ENCODE measurements at regions of chr1 and their contacts with region 1.

Region 1: GRCh38 chr1:185238447-185238846 is 78.6 kb downstream of the IVNS1ABP start:
- DNase-seq: peak in 4 of 5 donors; percentile 29 to 44 (median 35)
- H3K4me3 ChIP-seq: no peak overlapping the region
- H3K4me3 Mint-ChIP-seq: peak overlapping the region in 4 of 8 donors; percentile 4 to 60 (median 32)
- H3K27ac ChIP-seq: no peak overlapping the region
- H3K27ac Mint-ChIP-seq: peak overlapping the region in 2 of 7 donors; percentile 23 to 70
- H3K4me1 ChIP-seq: peaks cover 25% of the 10 kb centered on the region
- H3K4me1 Mint-ChIP-seq: peaks cover 17 to 35% (median 27%) of the 10 kb centered on the region in 4 donors
- H3K27me3 ChIP-seq: no peaks in the 10 kb centered on the region
- H3K27me3 Mint-ChIP-seq: no peaks in the 10 kb centered on the region

Region 2: GRCh38 chr1:185291652-185292051 is 53.2 kb after region 1 on chr1:
- CTCF ChIA-PET with region 1: interaction called, 22 read pairs
- POLR2A ChIA-PET with region 1: interaction called, 6 read pairs
- intact Hi-C with region 1: no loop called
- DNase-seq: no peak
- H3K4me3 ChIP-seq: no peak overlapping the region
- H3K4me3 Mint-ChIP-seq: no peak overlapping the region
- H3K27ac ChIP-seq: no peak overlapping the region
- H3K27ac Mint-ChIP-seq: peak overlapping the region in 4 of 7 donors; percentile 22 to 88 (median 70)
- H3K4me1 ChIP-seq: peaks cover 7% of the 10 kb centered on the region
- H3K4me1 Mint-ChIP-seq: peaks cover 7 to 32% (median 17%) of the 10 kb centered on the region in 4 donors
- H3K27me3 ChIP-seq: no peaks in the 10 kb centered on the region
- H3K27me3 Mint-ChIP-seq: no peaks in the 10 kb centered on the region

Region 3: DNA sequence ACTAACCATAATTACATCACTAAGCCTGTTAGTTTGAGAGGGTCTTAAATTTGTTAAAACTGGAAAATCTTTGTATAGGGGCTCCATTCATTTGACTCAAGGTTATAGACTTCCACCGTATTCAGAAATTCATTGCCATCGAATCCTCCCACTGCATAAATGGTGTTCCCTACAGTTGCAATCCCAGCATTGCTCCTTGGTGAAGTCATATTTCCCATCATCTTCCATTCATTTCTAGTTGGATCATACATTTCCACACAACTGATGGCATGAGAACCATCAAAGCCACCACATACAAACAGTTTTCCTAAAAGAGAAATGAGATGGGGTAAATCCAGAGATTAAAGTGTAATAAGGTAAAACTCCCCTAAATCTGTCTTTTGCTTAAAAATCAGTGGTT is 59.5 kb after region 1 on chr1:
- CTCF ChIA-PET with region 1: interaction called, 22 read pairs
- POLR2A ChIA-PET with region 1: interaction called, 6 read pairs
- intact Hi-C with region 1: no loop called
- DNase-seq: no peak
- H3K4me3 ChIP-seq: no peak overlapping the region
- H3K4me3 Mint-ChIP-seq: no peak overlapping the region
- H3K27ac ChIP-seq: no peak overlapping the region
- H3K27ac Mint-ChIP-seq: peak overlapping the region in 4 of 7 donors; percentile 4 to 74 (median 26)
- H3K4me1 ChIP-seq: no peaks in the 10 kb centered on the region
- H3K4me1 Mint-ChIP-seq: peaks cover 7 to 18% (median 10%) of the 10 kb centered on the region in 4 donors
- H3K27me3 ChIP-seq: no peaks in the 10 kb centered on the region
- H3K27me3 Mint-ChIP-seq: no peaks in the 10 kb centered on the region

Region 4: DNA sequence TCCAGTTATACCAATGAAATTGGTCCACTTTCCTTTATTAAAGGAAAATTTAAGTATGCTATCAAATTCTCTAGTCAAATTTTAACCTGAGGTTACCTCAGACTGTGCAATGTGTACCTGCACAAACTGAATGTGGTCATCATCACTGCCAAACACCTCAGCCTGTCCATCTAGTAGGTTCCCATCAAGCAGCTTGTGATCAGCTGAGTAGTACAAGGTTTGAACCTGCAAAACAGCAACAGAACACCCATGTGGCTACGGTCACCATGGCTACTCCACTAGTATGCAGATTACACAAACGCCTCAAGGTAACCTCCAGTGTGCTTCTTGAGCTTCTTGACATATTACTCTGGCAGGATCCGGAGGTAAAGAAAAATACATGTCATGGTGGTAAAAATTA is 67.0 kb after region 1 on chr1:
- CTCF ChIA-PET with region 1: interaction called, 17 read pairs
- POLR2A ChIA-PET with region 1: interaction called, 3 read pairs
- intact Hi-C with region 1: no loop called
- DNase-seq: no peak
- H3K4me3 ChIP-seq: no peak overlapping the region
- H3K4me3 Mint-ChIP-seq: no peak overlapping the region
- H3K27ac ChIP-seq: no peak overlapping the region
- H3K27ac Mint-ChIP-seq: peak overlapping the region in 4 of 7 donors; percentile 25 to 72 (median 39)
- H3K4me1 ChIP-seq: no peaks in the 10 kb centered on the region
- H3K4me1 Mint-ChIP-seq: peaks cover 3 to 13% (median 8%) of the 10 kb centered on the region in 4 donors
- H3K27me3 ChIP-seq: no peaks in the 10 kb centered on the region
- H3K27me3 Mint-ChIP-seq: no peaks in the 10 kb centered on the region

Region 5: DNA sequence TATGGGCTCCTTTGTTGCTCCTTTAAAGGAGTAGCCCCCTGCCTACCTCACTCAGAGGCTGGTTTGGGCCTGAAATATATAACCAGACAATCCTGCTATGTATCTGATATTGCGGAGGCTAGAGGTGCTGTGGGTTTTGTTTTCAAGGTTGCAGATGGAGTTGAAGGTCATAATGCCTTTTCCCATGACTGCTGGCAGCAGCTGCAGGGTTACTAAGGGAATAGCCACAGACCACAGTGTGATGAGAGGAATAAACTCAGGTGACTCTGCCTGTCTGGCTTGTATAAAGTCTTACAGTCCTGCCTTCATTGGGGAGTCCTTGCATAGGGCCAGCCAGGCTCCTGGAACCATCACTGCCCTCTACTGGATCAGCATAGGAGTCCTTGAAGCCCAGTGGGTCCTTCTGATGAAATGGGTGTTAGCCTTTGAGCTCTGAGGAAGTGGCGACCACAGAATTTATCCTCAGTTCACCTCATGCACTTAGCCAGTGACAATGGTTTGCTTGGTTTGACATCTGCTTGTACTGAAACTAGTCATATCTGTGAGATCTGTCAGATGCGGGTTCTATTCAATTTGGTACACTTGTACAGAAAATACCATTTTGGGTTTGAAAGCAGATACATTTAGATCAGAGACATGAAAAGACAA is 321.4 kb after region 1 on chr1:
- CTCF ChIA-PET with region 1: interaction called, 21 read pairs
- POLR2A ChIA-PET with region 1: no interaction called
- intact Hi-C with region 1: loop called (anchors 2 kb)
- DNase-seq: peak; percentile 56 to 60 (median 59)
- H3K4me3 ChIP-seq: no peak overlapping the region
- H3K4me3 Mint-ChIP-seq: peak overlapping the region in 6 of 8 donors; percentile 5 to 78 (median 62)
- H3K27ac ChIP-seq: no peak overlapping the region
- H3K27ac Mint-ChIP-seq: peak overlapping the region; percentile 76 to 94 (median 86)
- H3K4me1 ChIP-seq: peaks cover 51% of the 10 kb centered on the region
- H3K4me1 Mint-ChIP-seq: peaks cover 39 to 52% (median 46%) of the 10 kb centered on the region in 4 donors
- H3K27me3 ChIP-seq: no peaks in the 10 kb centered on the region
- H3K27me3 Mint-ChIP-seq: no peaks in the 10 kb centered on the region

Region 6: DNA sequence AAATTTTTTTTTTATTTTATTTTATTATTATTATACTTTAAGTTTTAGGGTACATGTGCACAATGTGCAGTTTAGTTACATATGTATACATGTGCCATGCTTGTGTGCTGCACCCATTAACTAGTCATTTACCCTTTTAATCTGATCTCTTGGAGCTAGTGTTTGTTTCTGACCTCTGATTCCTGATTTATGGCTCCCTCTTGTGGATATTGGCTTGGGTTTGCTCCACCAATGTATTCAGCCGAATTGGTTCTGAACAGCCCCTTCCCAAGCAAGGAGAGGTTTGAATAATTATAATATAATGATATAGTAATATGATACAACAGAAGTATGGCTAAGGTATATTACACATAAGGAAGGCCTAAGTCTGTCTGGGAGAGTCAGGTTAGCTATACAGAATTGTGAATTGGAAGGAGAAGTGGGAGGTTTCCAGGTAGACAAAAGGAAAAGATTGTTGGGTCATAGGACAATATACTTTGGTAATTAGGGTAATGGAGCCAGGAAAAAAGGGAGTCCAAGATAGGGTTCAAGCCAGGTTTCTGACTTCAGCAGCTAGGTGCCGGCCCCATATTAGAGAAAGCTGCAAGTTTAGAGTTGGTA is 442.7 kb after region 1 on chr1:
- CTCF ChIA-PET with region 1: interaction called, 81 read pairs
- POLR2A ChIA-PET with region 1: interaction called, 16 read pairs
- intact Hi-C with region 1: loop called (anchors 1 kb)
- DNase-seq: peak in 4 of 5 donors; percentile 36 to 43 (median 38)
- H3K4me3 ChIP-seq: no peak overlapping the region
- H3K4me3 Mint-ChIP-seq: peak overlapping the region in 1 of 8 donors; percentile 34
- H3K27ac ChIP-seq: no peak overlapping the region
- H3K27ac Mint-ChIP-seq: no peak overlapping the region
- H3K4me1 ChIP-seq: peaks cover 26% of the 10 kb centered on the region
- H3K4me1 Mint-ChIP-seq: peaks cover 19 to 32% (median 26%) of the 10 kb centered on the region in 4 donors
- H3K27me3 ChIP-seq: no peaks in the 10 kb centered on the region
- H3K27me3 Mint-ChIP-seq: no peaks in the 10 kb centered on the region

Region 7: GRCh38 chr1:185694081-185694480 is 455.6 kb after region 1 on chr1:
- CTCF ChIA-PET with region 1: interaction called, 10 read pairs
- POLR2A ChIA-PET with region 1: no interaction called
- intact Hi-C with region 1: loop called (anchors 1 kb)
- DNase-seq: peak in 3 of 5 donors; percentile 12 to 24 (median 17)
- H3K4me3 ChIP-seq: peak overlapping the region; percentile 4 to 53
- H3K4me3 Mint-ChIP-seq: peak overlapping the region; percentile 80 to 91 (median 86)
- H3K27ac ChIP-seq: peak overlapping the region; percentile 40
- H3K27ac Mint-ChIP-seq: peak overlapping the region; percentile 84 to 94 (median 92)
- H3K4me1 ChIP-seq: peaks cover 20% of the 10 kb centered on the region
- H3K4me1 Mint-ChIP-seq: peaks cover 13 to 19% (median 16%) of the 10 kb centered on the region in 4 donors
- H3K27me3 ChIP-seq: no peaks in the 10 kb centered on the region
- H3K27me3 Mint-ChIP-seq: peaks cover 6 to 8% of the 10 kb centered on the region in 2 donors